HCT116 (cell line): ENCODE measurements at regions of chr18 and their contacts with region 1.

Region 1: GRCh38 chr18:9827641-9828505 is 57.9 kb upstream of the TXNDC2 start:
- DNase-seq: peak; percentile 97
- ATAC-seq: peak; percentile 81
- H3K4me3 ChIP-seq: peak overlapping the region in 1 of 2 experiments; percentile 42; a peak in 3 of 4 replicates
- H3K27ac ChIP-seq: peak overlapping the region; percentile 87
- H3K4me1 ChIP-seq: peaks cover 59 to 76% of the 10 kb centered on the region in 2 experiments
- H3K27me3 ChIP-seq: no peaks in the 10 kb centered on the region
- CTCF ChIP-seq: no peak
- POLR2A ChIP-seq: peak; percentile 31
- RAD21 ChIP-seq: no peak

Region 2: GRCh38 chr18:9771261-9771976 is 56.5 kb before region 1 on chr18:
- CTCF ChIA-PET with region 1: no interaction called
- POLR2A ChIA-PET with region 1: no interaction called
- RAD21 ChIA-PET with region 1: no interaction called
- intact Hi-C with region 1: no loop called
- DNase-seq: peak; percentile 56
- ATAC-seq: peak; percentile 99
- H3K4me3 ChIP-seq: 0 out of 4 replicates have a peak overlapping the region, but pooled peaks of 1 of the 2 experiments have one; percentile 4
- H3K27ac ChIP-seq: no peak overlapping the region
- H3K4me1 ChIP-seq: peaks cover 0 to 20% of the 10 kb centered on the region in 2 experiments; a peak in 3 of 4 replicates
- H3K27me3 ChIP-seq: no peaks in the 10 kb centered on the region
- CTCF ChIP-seq: peak; percentile 69 to 99 (median 96)
- POLR2A ChIP-seq: no peak
- RAD21 ChIP-seq: peak; percentile 90

Region 3: GRCh38 chr18:9869715-9870430 is 42.0 kb after region 1 on chr18:
- CTCF ChIA-PET with region 1: no interaction called
- POLR2A ChIA-PET with region 1: interaction called, 10 read pairs
- RAD21 ChIA-PET with region 1: no interaction called
- intact Hi-C with region 1: loop called (anchors 1 kb)
- DNase-seq: peak; percentile 93
- ATAC-seq: peak; percentile 75
- H3K4me3 ChIP-seq: peak overlapping the region in 1 of 2 experiments; percentile 21; a peak in 2 of 4 replicates
- H3K27ac ChIP-seq: peak overlapping the region; percentile 73
- H3K4me1 ChIP-seq: peaks cover 33 to 69% of the 10 kb centered on the region in 2 experiments
- H3K27me3 ChIP-seq: no peaks in the 10 kb centered on the region
- CTCF ChIP-seq: no peak
- POLR2A ChIP-seq: no peak
- RAD21 ChIP-seq: peak; percentile 35; the same call in 1 of the 2 replicates

Region 4: DNA sequence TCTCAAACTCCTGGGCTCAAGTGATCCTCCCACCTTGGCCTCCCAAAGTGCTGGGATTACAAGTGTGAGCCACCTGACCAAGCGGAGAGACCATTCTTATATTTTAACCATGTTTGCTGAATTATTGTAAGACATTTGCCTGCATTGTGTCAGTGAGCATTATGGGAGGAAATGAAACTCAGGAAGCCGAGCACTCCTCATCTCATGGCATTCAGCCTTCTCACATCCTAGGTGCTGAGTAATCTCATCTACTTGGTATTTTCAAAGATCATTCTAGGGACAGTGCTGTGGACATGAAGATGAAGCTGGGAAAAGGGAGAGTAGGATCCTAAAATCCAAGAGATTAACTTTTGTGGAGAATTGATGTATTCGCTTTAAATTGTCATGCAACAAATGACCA is 764.0 kb after region 1 on chr18:
- CTCF ChIA-PET with region 1: no interaction called
- POLR2A ChIA-PET with region 1: no interaction called
- RAD21 ChIA-PET with region 1: no interaction called
- intact Hi-C with region 1: no loop called
- DNase-seq: no peak
- ATAC-seq: no peak
- H3K4me3 ChIP-seq: no peak overlapping the region
- H3K27ac ChIP-seq: no peak overlapping the region
- H3K4me1 ChIP-seq: peaks cover 0 to 7% of the 10 kb centered on the region in 2 experiments; a peak in 3 of 4 replicates
- H3K27me3 ChIP-seq: no peaks in the 10 kb centered on the region
- CTCF ChIP-seq: no peak
- POLR2A ChIP-seq: no peak
- RAD21 ChIP-seq: no peak